Activated CD4-positive, alpha-beta T cell treated with anti-CD3 and anti-CD28 coated beads, Interleukin-2, amount 10 ng/mL, durations not matched to agents 7 days and 5 days (primary cell): ENCODE measurements at regions of chr19 and their contacts with region 1.

Region 1: GRCh38 chr19:1945899-1946298 is 4.9 kb downstream of the CSNK1G2 start:
- DNase-seq: peak; percentile 28
- H3K4me3 Mint-ChIP-seq: no peak overlapping the region
- H3K27ac Mint-ChIP-seq: peak overlapping the region; percentile 52
- H3K4me1 Mint-ChIP-seq: peaks cover 30% of the 10 kb centered on the region
- H3K27me3 Mint-ChIP-seq: no peaks in the 10 kb centered on the region

Region 2: GRCh38 chr19:1989513-1990229 is 43.8 kb after region 1 on chr19:
- CTCF ChIA-PET with region 1: interaction called, 10 read pairs
- POLR2A ChIA-PET with region 1: no interaction called
- DNase-seq: no peak
- H3K4me3 Mint-ChIP-seq: no peak overlapping the region
- H3K27ac Mint-ChIP-seq: no peak overlapping the region
- H3K4me1 Mint-ChIP-seq: no peaks in the 10 kb centered on the region
- H3K27me3 Mint-ChIP-seq: no peaks in the 10 kb centered on the region